ENCODE measurements at regions of chr1 and their contacts with region 1.

Region 1: DNA sequence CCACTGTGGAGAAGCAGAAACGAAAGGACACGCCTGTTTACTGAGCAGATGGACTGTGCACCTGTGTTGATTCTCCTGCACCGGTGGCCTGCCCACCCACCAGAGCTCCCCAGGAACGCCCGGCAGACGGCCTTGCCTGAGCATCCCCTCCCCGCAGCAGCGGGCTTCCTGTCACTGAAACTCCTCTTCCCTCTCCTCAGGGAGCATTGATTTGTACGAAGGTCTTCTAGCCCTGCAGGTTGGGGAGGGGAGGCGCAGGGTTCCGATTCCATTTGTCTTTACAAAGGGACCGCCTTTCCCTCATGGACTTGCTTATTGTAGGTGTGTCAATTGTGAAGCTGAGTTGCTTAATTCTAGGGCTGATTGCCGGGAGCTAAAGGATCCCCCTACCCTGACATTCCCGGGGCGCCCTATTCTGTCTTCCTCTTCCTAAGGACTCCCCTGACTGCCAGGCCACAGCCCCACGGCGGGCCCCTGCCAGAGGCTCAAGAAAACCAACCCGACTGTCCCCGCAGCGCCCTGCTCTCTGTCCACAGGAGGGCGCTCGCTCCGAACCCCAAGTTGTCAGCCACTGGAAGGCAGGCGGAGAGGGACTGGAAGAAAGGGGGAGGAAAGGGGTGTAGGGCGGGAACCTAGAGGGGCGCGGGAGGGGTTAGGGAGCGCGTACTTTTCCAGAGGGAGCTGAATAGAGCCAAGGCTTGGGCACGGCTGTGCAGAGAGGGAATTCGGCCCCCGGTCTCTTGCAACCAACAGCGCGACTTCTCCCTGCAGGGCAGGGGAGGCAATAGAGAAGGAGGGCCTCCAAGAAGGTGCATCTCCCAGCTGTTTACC is 2.8 kb downstream of the S100A6 start:
- DNase-seq: peak; percentile 81
- ATAC-seq: peak; percentile 48
- H3K4me3 ChIP-seq: peak overlapping the region; percentile 74 to 89
- H3K27ac ChIP-seq: peak overlapping the region; percentile 94
- H3K4me1 ChIP-seq: peaks cover 46 to 60% of the 10 kb centered on the region in 2 experiments
- H3K27me3 ChIP-seq: no peaks in the 10 kb centered on the region
- CTCF ChIP-seq: peak in 2 of 3 experiments; percentile 93 to 96; a peak in 4 of 6 replicates
- POLR2A ChIP-seq: no peak
- RAD21 ChIP-seq: no peak

Region 2: GRCh38 chr1:153422450-153423068 is 110.4 kb before region 1 on chr1:
- CTCF ChIA-PET with region 1: no interaction called
- POLR2A ChIA-PET with region 1: no interaction called
- RAD21 ChIA-PET with region 1: no interaction called
- intact Hi-C with region 1: no loop called
- DNase-seq: peak; percentile 28
- ATAC-seq: peak; percentile 74
- H3K4me3 ChIP-seq: no peak overlapping the region
- H3K27ac ChIP-seq: no peak overlapping the region
- H3K4me1 ChIP-seq: no peaks in the 10 kb centered on the region
- H3K27me3 ChIP-seq: peaks cover 77% of the 10 kb centered on the region
- CTCF ChIP-seq: no peak
- POLR2A ChIP-seq: no peak
- RAD21 ChIP-seq: no peak

Region 3: DNA sequence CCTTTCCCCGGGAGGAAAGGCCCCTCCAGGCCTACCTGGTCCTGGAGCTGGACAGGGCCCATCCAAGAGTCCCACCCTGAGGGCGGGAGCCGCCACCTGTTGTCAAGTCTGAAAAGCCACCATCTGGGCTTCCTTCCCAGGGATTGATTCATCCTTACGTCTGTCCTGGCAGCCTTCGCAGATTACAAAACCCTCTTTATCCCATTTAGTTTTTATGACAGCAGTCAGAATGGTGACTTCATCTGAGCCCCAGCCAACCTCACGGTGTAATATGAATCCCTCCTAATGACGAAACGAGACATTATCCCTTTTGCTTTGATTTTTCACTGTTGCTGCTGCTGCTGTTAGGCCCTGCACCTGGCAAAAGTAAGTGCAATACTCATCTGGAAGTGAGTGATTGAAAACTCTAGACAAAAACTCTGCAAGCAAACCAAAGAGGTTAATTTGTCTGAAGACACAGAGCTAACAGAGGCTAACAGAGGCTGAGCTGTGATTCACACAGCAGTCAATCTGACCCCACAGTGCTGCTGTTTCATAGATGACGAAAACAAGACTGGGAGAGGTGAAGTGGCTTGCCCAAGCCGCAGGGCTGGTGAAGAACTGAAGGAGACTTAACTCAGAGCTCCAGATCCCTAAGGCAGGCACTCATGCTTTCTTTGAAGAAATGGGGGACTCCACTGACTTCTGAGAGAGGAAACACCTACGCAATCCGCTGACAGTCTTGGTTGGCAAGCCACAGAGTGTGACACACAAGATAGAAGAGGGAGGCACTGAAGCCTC is 42.5 kb before region 1 on chr1:
- CTCF ChIA-PET with region 1: no interaction called
- POLR2A ChIA-PET with region 1: no interaction called
- RAD21 ChIA-PET with region 1: no interaction called
- intact Hi-C with region 1: no loop called
- DNase-seq: peak; percentile 93
- ATAC-seq: peak; percentile 77
- H3K4me3 ChIP-seq: peak overlapping the region in 1 of 2 experiments; percentile 43; a peak in 2 of 4 replicates
- H3K27ac ChIP-seq: no peak overlapping the region
- H3K4me1 ChIP-seq: peaks cover 3 to 28% of the 10 kb centered on the region in 2 experiments; a peak in 3 of 4 replicates
- H3K27me3 ChIP-seq: no peaks in the 10 kb centered on the region
- CTCF ChIP-seq: 0 out of 6 replicates have a peak, but pooled peaks of 1 of the 3 experiments have one; percentile 6
- POLR2A ChIP-seq: no peak
- RAD21 ChIP-seq: peak; percentile 26; the same call in 1 of the 2 replicates

Region 4: GRCh38 chr1:153510984-153511410 is 22.0 kb before region 1 on chr1:
- CTCF ChIA-PET with region 1: interaction called, 10 read pairs
- POLR2A ChIA-PET with region 1: interaction called, 8 read pairs
- RAD21 ChIA-PET with region 1: no interaction called
- intact Hi-C with region 1: loop called (anchors 2 kb)
- DNase-seq: peak; percentile 70
- ATAC-seq: peak; percentile 78
- H3K4me3 ChIP-seq: no peak overlapping the region
- H3K27ac ChIP-seq: peak overlapping the region; percentile 39
- H3K4me1 ChIP-seq: peaks cover 34 to 91% of the 10 kb centered on the region in 2 experiments
- H3K27me3 ChIP-seq: no peaks in the 10 kb centered on the region
- CTCF ChIP-seq: peak; percentile 90 to 95 (median 92)
- POLR2A ChIP-seq: no peak
- RAD21 ChIP-seq: peak; percentile 100

Region 5: GRCh38 chr1:153545067-153546055 is 12.4 kb after region 1 on chr1 and contains the start of gene S100A4:
- CTCF ChIA-PET with region 1: interaction called, 11 read pairs
- POLR2A ChIA-PET with region 1: interaction called, 78 read pairs
- RAD21 ChIA-PET with region 1: interaction called in 1 of 2 experiments, 5 read pairs
- intact Hi-C with region 1: no loop called
- DNase-seq: peak; percentile 87
- ATAC-seq: peak; percentile 71
- H3K4me3 ChIP-seq: peak within 1 kb of the TSS; percentile 50 to 54
- H3K27ac ChIP-seq: peak within 1 kb of the TSS; percentile 97
- H3K4me1 ChIP-seq: peaks cover 96 to 100% of the 10 kb centered on the region in 2 experiments
- H3K27me3 ChIP-seq: no peaks in the 10 kb centered on the region
- CTCF ChIP-seq: no peak
- POLR2A ChIP-seq: peak; percentile 60
- RAD21 ChIP-seq: no peak
- total RNA-seq, gene S100A4: 384 TPM

Region 6: DNA sequence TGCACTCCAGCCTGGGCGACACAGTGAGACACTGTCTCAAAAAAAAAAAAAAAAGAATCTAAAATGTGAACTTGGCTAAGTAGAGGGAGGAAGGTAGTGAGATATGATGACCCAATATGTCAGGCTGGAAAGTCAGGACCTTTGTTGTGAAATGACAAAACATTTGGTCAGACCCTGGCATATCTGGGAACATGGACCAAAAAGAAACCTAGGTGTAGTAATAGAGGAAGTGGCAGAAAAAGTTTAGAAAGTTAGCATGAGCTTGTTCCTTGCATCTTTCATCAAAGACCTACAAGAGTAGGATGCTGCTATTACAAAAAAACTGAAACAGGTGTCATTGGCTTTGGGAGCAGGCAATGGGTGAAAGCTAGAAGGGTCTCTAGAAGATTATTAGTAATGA is 23.4 kb after region 1 on chr1:
- CTCF ChIA-PET with region 1: interaction called, 11 read pairs
- POLR2A ChIA-PET with region 1: interaction called, 78 read pairs
- RAD21 ChIA-PET with region 1: interaction called in 1 of 2 experiments, 3 read pairs
- intact Hi-C with region 1: no loop called
- DNase-seq: no peak
- ATAC-seq: no peak
- H3K4me3 ChIP-seq: no peak overlapping the region
- H3K27ac ChIP-seq: no peak overlapping the region
- H3K4me1 ChIP-seq: peaks cover 10 to 36% of the 10 kb centered on the region in 2 experiments
- H3K27me3 ChIP-seq: no peaks in the 10 kb centered on the region
- CTCF ChIP-seq: no peak
- POLR2A ChIP-seq: no peak
- RAD21 ChIP-seq: no peak

Region 7: GRCh38 chr1:153566440-153567379 is 33.7 kb after region 1 on chr1:
- CTCF ChIA-PET with region 1: interaction called, 35 read pairs
- POLR2A ChIA-PET with region 1: interaction called, 114 read pairs
- RAD21 ChIA-PET with region 1: interaction called, 5 to 11 read pairs
- intact Hi-C with region 1: loop called (anchors 1 kb)
- DNase-seq: peak; percentile 96
- ATAC-seq: peak; percentile 79
- H3K4me3 ChIP-seq: peak overlapping the region; percentile 23 to 41
- H3K27ac ChIP-seq: peak overlapping the region; percentile 100
- H3K4me1 ChIP-seq: peaks cover 62 to 81% of the 10 kb centered on the region in 2 experiments
- H3K27me3 ChIP-seq: no peaks in the 10 kb centered on the region
- CTCF ChIP-seq: no peak
- POLR2A ChIP-seq: peak; percentile 48
- RAD21 ChIP-seq: no peak

Region 8: GRCh38 chr1:153608742-153609584 is 76.0 kb after region 1 on chr1:
- CTCF ChIA-PET with region 1: interaction called, 4 read pairs
- POLR2A ChIA-PET with region 1: interaction called, 61 read pairs
- RAD21 ChIA-PET with region 1: interaction called in 1 of 2 experiments, 3 read pairs
- intact Hi-C with region 1: loop called (anchors 5 kb)
- DNase-seq: peak; percentile 90
- ATAC-seq: peak; percentile 70
- H3K4me3 ChIP-seq: peak overlapping the region; percentile 51 to 59
- H3K27ac ChIP-seq: peak overlapping the region; percentile 72
- H3K4me1 ChIP-seq: peaks cover 41 to 64% of the 10 kb centered on the region in 2 experiments
- H3K27me3 ChIP-seq: no peaks in the 10 kb centered on the region
- CTCF ChIP-seq: no peak
- POLR2A ChIP-seq: peak; percentile 34
- RAD21 ChIP-seq: no peak

Measured in HCT116 (cell line).